WTC11 (cell line): ENCODE measurements at regions of chr17 and their contacts with region 1.

Region 1: DNA sequence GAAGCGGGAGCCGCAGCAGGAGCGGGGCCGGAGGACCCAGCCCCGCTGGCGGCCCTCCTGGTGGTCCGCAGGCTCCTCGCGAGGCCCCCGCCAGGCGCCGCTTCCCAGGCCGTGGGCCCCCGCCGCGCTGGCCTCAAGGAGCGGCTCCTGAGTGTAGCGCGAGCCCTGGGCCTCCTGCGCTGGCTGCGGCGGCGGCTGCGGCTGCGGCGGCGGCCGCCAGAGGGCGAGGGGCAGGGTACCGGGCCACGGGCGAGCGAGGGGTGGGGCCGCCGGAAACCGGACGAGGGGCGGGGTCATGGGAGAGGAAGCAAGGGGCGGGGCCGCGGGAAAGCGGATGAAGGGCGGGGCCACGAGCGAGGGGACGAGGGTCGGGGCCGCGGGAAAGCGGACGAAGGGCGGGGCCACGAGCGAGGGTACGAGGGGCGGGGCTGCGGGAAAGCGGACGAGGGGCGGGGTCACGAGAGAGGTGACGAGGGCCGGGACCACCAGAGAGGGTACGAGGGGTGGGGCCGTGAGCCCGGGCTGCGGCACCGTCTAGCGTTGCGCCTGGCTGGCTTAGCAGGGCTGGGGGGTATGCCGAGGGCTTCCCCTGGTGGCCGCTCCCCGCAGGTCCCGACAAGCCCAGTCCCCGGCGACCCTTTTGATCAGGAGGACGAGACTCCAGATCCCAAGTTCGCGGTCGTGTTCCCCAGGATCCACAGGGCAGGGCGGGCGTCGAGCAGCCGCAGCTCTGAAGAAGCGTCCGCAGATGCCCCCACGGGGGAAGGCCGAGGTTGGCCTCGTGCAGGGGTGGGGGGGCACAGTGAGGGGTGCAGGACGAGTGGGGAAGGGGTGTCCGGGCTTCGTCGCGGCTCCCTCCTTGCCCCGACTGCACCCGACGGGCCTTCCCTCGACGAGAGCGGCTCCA is 1.7 kb downstream of the MYO15B start:
- DNase-seq: peak; percentile 95
- ATAC-seq: peak; percentile 89
- H3K4me3 Mint-ChIP-seq: peak overlapping the region; percentile 49
- H3K27ac Mint-ChIP-seq: no peak overlapping the region
- H3K4me1 Mint-ChIP-seq: peaks cover 5% of the 10 kb centered on the region
- H3K27me3 Mint-ChIP-seq: peaks cover 25% of the 10 kb centered on the region
- CTCF ChIP-seq: peak; percentile 49; the same call in 1 of the 2 replicates

Region 2: DNA sequence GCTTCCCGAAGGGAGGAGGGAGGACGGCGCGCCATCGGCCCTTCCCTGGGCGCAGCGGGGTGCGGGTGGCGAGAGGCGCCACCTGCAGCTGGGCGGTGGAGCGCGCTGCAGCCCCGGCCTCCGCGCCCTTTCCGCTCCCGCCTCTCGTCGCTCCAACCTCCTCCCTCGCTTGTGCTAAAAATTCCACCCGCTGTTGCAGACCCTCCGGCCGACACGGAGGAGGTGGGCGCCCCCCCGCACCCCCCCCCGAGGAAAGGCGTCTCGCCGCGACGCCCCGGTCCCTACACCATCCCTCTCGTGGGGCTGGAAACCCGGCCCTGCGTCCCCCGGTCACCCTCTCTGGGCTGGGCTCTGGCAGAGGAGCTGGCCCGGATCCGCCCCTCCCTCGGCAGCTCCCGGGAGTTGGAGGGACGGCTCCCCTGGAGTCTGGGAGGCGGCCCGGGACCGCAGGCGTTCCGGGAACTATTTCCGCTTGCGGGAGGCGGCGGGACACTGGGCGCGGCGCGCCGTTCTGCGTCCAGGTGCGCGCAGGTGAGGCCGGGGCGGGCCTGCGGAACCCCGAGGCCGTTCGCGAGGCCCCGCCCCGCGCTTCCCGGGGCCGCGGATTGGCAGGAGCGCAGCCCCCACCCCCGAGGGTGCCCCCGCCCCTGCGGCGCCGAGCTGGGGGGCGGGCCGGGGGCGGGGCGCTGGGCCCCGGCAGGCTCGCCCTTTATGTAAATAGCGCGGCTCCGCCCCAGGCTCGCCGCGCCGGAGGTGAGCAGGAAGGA is 64.1 kb before region 1 on chr17 and contains the start of gene LLGL2:
- CTCF ChIA-PET with region 1: interaction called, 14 read pairs
- POLR2A ChIA-PET with region 1: interaction called, 4 read pairs
- DNase-seq: peak; percentile 87
- ATAC-seq: peak; percentile 89
- H3K4me3 Mint-ChIP-seq: peak within 1 kb of the TSS; percentile 83
- H3K27ac Mint-ChIP-seq: peak within 1 kb of the TSS; percentile 80
- H3K4me1 Mint-ChIP-seq: peaks cover 17% of the 10 kb centered on the region
- H3K27me3 Mint-ChIP-seq: 0 out of 2 replicates have a peak, but pooled peaks cover 3% of the 10 kb centered on the region
- CTCF ChIP-seq: no peak; the same call in 1 of the 2 replicates
- total RNA-seq, gene LLGL2: 94.3 to 103 TPM (median 97.0 TPM) in 3 replicates

Region 3: GRCh38 chr17:75572735-75573539 is 16.3 kb before region 1 on chr17:
- CTCF ChIA-PET with region 1: interaction called, 14 read pairs
- POLR2A ChIA-PET with region 1: no interaction called
- DNase-seq: no peak
- ATAC-seq: no peak
- H3K4me3 Mint-ChIP-seq: no peak overlapping the region
- H3K27ac Mint-ChIP-seq: no peak overlapping the region
- H3K4me1 Mint-ChIP-seq: no peaks in the 10 kb centered on the region
- H3K27me3 Mint-ChIP-seq: no peaks in the 10 kb centered on the region
- CTCF ChIP-seq: no peak

Region 4: GRCh38 chr17:75707131-75707571 is 117.9 kb after region 1 on chr17:
- CTCF ChIA-PET with region 1: no interaction called
- POLR2A ChIA-PET with region 1: no interaction called
- DNase-seq: no peak
- ATAC-seq: no peak
- H3K4me3 Mint-ChIP-seq: no peak overlapping the region
- H3K27ac Mint-ChIP-seq: peak overlapping the region; percentile 11; the same call in 1 of the 2 replicates
- H3K4me1 Mint-ChIP-seq: no peaks in the 10 kb centered on the region
- H3K27me3 Mint-ChIP-seq: no peaks in the 10 kb centered on the region
- CTCF ChIP-seq: no peak